Panc1 (cell line): ENCODE measurements at regions of chr11 and their contacts with region 1.

Region 1: GRCh38 chr11:68257475-68258362 is 14.1 kb downstream of the C11orf24 start:
- DNase-seq: peak; percentile 57
- ATAC-seq: peak; percentile 91
- H3K4me3 ChIP-seq: peak overlapping the region in 1 of 2 experiments; percentile 7; a peak in 1 of 4 replicates
- H3K27ac ChIP-seq: peak overlapping the region; percentile 74; the same call in 1 of the 2 replicates
- H3K4me1 ChIP-seq: peaks cover 13% of the 10 kb centered on the region
- H3K27me3 ChIP-seq: no peaks in the 10 kb centered on the region
- CTCF ChIP-seq: peak; percentile 96

Region 2: GRCh38 chr11:68202165-68202564 is 55.6 kb before region 1 on chr11:
- CTCF ChIA-PET with region 1: no interaction called
- POLR2A ChIA-PET with region 1: no interaction called
- in situ Hi-C with region 1: no loop called
- intact Hi-C with region 1: no loop called
- DNase-seq: no peak
- ATAC-seq: no peak
- H3K4me3 ChIP-seq: no peak overlapping the region
- H3K27ac ChIP-seq: no peak overlapping the region
- H3K4me1 ChIP-seq: peaks cover 32% of the 10 kb centered on the region
- H3K27me3 ChIP-seq: no peaks in the 10 kb centered on the region
- CTCF ChIP-seq: no peak

Region 3: GRCh38 chr11:68297812-68298658 is 40.3 kb after region 1 on chr11:
- CTCF ChIA-PET with region 1: interaction called, 40 read pairs
- POLR2A ChIA-PET with region 1: no interaction called
- in situ Hi-C with region 1: no loop called
- intact Hi-C with region 1: loop called (anchors 1 kb)
- DNase-seq: no peak
- ATAC-seq: peak; percentile 95
- H3K4me3 ChIP-seq: peak overlapping the region in 1 of 2 experiments; percentile 47; a peak in 2 of 4 replicates
- H3K27ac ChIP-seq: peak overlapping the region; percentile 36
- H3K4me1 ChIP-seq: peaks cover 24% of the 10 kb centered on the region
- H3K27me3 ChIP-seq: no peaks in the 10 kb centered on the region
- CTCF ChIP-seq: peak; percentile 100

Region 4: GRCh38 chr11:68383976-68384501 is 126.3 kb after region 1 on chr11:
- CTCF ChIA-PET with region 1: interaction called, 4 read pairs
- POLR2A ChIA-PET with region 1: no interaction called
- in situ Hi-C with region 1: no loop called
- intact Hi-C with region 1: loop called (anchors 5 kb)
- DNase-seq: peak; percentile 32
- ATAC-seq: no peak
- H3K4me3 ChIP-seq: no peak overlapping the region
- H3K27ac ChIP-seq: peak overlapping the region; percentile 75; the same call in 1 of the 2 replicates
- H3K4me1 ChIP-seq: peaks cover 50% of the 10 kb centered on the region
- H3K27me3 ChIP-seq: no peaks in the 10 kb centered on the region
- CTCF ChIP-seq: peak; percentile 99

Region 5: GRCh38 chr11:68447015-68447801 is 189.5 kb after region 1 on chr11:
- CTCF ChIA-PET with region 1: no interaction called
- POLR2A ChIA-PET with region 1: no interaction called
- in situ Hi-C with region 1: no loop called
- intact Hi-C with region 1: loop called (anchors 10 kb)
- DNase-seq: peak; percentile 20
- ATAC-seq: peak; percentile 95
- H3K4me3 ChIP-seq: no peak overlapping the region
- H3K27ac ChIP-seq: no peak overlapping the region
- H3K4me1 ChIP-seq: peaks cover 4% of the 10 kb centered on the region; the same call in 1 of the 2 replicates
- H3K27me3 ChIP-seq: no peaks in the 10 kb centered on the region
- CTCF ChIP-seq: peak; percentile 98